A549 (cell line): ENCODE measurements at regions of chr5 and their contacts with region 1.

Region 1: GRCh38 chr5:77015938-77016569 is 14.2 kb upstream of the AGGF1 start:
- DNase-seq: peak in 1 of 2 experiments; percentile 78
- ATAC-seq: peak; percentile 76 to 85; a peak in 5 of 6 replicates
- H3K4me3 ChIP-seq: no peak overlapping the region
- H3K27ac ChIP-seq: 0 out of 6 replicates have a peak overlapping the region, but pooled peaks of 1 of the 2 experiments have one; percentile 11
- H3K4me1 ChIP-seq: no peaks in the 10 kb centered on the region
- CTCF ChIP-seq: peak; percentile 64
- EP300 ChIP-seq: no peak
- POLR2A ChIP-seq: no peak
- RAD21 ChIP-seq: peak; percentile 79 to 85

Region 2: GRCh38 chr5:76766746-76767145 is 249.3 kb before region 1 on chr5:
- CTCF ChIA-PET with region 1: no interaction called
- POLR2A ChIA-PET with region 1: no interaction called
- DNase-seq: no peak
- ATAC-seq: no peak
- H3K4me3 ChIP-seq: no peak overlapping the region
- H3K27ac ChIP-seq: peak overlapping the region in 1 of 2 experiments; percentile 23; a peak in 2 of 6 replicates
- H3K4me1 ChIP-seq: peaks cover 8% of the 10 kb centered on the region
- CTCF ChIP-seq: no peak
- EP300 ChIP-seq: no peak
- POLR2A ChIP-seq: no peak
- RAD21 ChIP-seq: no peak

Region 3: DNA sequence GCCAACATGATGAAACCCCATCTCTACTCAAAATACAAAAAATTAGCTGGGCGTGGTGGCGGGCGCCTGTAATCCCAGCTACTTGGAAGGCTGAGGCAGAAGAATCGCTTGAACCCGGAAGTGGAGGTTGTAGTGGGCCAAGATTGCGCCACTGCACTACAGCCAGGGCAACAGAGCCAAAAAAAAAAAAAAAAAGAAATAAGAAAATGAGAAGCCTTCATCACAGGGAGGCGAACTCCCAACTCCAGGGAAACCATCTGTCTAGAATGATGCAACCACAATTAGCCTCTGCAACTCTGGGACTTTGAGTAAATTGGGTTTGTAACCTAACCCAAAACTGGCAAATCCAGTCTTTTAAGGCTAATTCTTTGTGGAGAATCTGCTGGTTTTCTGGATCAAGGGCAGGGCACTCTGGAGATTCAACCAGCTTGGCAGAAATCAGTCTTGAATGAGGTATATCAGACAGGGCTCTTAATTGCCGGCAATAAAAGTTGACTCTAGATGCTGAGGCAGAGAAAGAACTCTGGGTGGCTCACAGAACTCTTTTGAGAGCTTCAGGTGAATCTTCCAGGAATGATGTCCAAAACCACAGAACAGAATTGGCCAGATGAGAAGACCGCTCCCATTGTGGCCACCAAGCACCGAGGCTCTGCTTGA is 156.3 kb before region 1 on chr5:
- CTCF ChIA-PET with region 1: interaction called, 161 read pairs
- POLR2A ChIA-PET with region 1: no interaction called
- DNase-seq: no peak
- ATAC-seq: no peak
- H3K4me3 ChIP-seq: no peak overlapping the region
- H3K27ac ChIP-seq: no peak overlapping the region
- H3K4me1 ChIP-seq: peaks cover 10% of the 10 kb centered on the region
- CTCF ChIP-seq: no peak
- EP300 ChIP-seq: no peak
- POLR2A ChIP-seq: no peak
- RAD21 ChIP-seq: no peak

Region 4: DNA sequence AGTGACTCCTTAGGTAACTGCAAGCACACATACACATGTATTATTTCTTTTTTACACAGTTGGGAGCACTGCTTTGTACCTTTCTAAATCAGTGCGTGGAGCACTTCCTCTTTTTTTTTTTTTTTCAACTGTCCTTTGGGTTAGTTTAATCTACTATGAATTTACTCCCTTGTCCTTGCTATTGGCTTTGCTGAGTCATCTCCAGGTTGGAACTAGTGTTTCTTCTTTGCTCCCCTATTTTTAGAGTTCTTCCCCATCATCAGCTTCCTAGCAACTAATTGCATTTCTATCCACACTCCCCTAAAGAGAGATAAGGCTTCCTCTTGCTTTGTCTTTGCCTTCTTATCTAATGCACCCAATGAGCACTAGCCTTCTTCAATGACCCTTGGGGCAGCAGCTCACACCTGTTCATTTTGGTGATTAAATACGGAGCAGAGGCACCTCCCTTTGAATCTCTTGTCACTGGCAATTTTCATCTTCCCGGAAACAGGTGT is 141.9 kb before region 1 on chr5:
- CTCF ChIA-PET with region 1: interaction called, 161 read pairs
- POLR2A ChIA-PET with region 1: no interaction called
- DNase-seq: no peak
- ATAC-seq: no peak
- H3K4me3 ChIP-seq: no peak overlapping the region
- H3K27ac ChIP-seq: peak overlapping the region; percentile 1 to 45; a peak in 4 of 6 replicates
- H3K4me1 ChIP-seq: peaks cover 17% of the 10 kb centered on the region
- CTCF ChIP-seq: no peak
- EP300 ChIP-seq: no peak
- POLR2A ChIP-seq: no peak
- RAD21 ChIP-seq: no peak

Region 5: DNA sequence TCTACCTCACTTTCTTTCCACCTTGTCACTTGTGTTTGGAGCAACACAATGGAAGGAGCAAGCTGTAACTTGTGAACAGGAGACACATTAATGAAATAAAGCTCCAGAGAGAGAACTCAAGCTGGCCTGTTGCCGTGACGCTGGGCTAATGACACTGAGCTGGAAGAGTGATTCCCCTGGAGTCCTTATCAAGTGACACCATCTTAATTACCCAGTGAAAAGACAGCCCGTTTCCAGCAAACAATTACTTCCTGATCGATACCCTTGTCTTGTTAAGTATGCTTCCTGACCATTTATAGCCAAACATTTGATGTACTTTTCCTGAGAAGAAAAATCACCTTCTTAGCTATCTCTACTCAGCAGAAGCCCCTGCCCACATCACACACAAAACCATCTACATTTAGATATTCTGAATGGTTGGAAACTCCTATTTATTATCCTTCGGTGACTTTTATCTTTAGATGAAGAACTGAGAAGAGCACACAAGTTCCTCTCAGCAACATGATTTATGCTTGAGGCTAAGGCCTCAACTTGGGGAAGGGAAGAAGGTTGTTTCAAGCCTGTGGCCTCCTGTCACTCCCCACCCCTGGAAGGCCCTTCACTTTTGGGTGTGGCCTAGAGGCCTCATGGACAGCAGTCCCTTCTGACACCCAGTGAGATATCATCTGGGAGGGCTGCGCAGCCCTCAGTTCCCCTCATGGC is 29.1 kb before region 1 on chr5:
- CTCF ChIA-PET with region 1: no interaction called
- POLR2A ChIA-PET with region 1: no interaction called
- DNase-seq: no peak
- ATAC-seq: no peak
- H3K4me3 ChIP-seq: no peak overlapping the region
- H3K27ac ChIP-seq: no peak overlapping the region
- H3K4me1 ChIP-seq: no peaks in the 10 kb centered on the region
- CTCF ChIP-seq: no peak
- EP300 ChIP-seq: no peak
- POLR2A ChIP-seq: no peak
- RAD21 ChIP-seq: no peak